ENCODE measurements at regions of chr3 and their contacts with region 1.

Region 1: DNA sequence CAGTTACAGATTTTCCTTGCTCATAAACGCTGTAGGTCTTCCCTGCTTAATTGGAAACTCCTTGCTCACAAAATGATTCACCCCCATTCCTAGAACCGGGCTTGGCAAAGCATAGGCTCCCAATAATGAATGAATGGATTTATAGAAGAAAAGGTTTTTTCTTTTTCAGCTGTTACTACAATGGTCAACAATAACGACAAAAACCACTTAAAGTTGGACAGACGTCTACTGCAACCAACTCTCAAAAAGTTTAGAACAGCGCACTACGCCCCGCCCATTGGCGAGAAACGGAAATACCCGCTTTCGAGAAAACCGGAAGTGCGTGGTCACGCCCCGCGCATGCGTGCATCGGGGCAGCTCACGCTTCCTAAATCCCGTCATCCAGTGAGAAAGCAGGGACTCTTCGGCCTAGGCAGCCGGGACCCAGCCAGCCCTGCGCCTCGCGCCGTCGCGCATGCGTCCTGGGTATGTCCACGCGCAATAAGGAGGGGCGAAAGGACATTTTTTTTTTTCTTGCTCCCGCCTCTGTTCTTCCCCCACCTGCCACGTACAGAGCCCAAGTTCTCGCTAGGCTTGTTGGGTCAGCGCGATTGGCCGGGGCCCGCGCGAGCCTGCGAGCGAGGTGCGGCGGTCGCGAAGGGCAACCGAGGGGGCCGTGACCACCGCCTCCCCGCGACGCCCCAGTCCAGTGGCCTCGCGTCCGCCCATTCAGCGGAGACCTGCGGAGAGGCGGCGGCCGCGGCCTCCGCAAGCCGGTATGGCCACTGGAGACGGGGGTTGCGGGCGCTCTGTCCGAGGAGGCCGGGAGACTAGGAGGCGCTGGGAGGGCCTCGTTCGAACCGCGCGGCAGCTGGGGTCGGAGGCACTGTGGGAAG is at the start of gene TFG:
- DNase-seq: peak; percentile 100
- ATAC-seq: peak; percentile 92
- H3K4me3 Mint-ChIP-seq: peak within 1 kb of the TSS; percentile 77
- H3K27ac Mint-ChIP-seq: peak within 1 kb of the TSS; percentile 95
- H3K4me1 Mint-ChIP-seq: peaks cover 38% of the 10 kb centered on the region
- H3K27me3 Mint-ChIP-seq: no peaks in the 10 kb centered on the region
- CTCF ChIP-seq: no peak
- total RNA-seq, gene TFG: 59.2 TPM

Region 2: DNA sequence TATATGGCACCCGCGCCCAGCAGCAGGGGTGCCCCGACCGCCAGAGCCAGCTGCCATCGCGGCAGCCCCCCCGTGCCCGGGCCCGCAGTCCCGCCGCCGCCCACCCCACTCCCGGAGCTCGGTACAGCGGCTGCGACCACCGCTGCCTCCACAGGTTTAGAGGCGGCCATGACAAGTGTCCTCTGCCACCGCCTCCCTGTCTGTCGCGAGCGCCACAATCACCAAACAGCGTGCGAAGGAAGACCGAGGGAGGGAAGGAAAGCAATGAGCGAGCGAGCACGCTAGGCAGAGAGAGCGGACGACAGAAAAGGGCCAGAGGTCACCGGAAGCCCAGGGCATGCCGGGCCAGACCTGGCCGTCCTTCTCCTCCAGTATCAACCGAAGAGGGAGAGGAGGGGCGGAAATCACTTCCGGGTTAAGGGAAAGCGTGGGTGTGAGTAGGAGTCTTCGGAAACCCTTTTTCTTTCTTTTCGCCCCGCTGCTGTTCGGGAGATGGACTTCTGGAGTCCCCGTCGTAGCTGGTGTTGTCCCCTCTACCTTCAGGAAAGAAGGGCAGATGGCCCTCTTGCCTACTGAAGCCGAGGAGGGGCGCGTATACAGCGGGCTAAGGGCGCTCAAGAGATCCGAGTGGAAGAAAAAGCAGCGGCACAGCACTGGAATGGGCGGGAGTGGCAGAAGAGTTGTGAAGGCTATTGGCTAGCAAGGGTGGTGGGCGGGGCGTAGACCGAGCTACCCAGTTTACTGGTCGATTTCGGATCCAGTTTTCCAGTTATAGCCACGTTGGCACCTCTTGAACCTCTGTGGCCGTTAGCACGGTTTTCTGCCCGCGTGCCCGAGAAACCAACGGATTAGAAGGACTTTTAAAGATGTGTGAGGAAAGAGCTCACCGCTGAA is 308.2 kb before region 1 on chr3 and contains the starts of genes LNP1 and TOMM70:
- CTCF ChIA-PET with region 1: no interaction called
- POLR2A ChIA-PET with region 1: interaction called, 16 read pairs
- intact Hi-C with region 1: no loop called
- DNase-seq: peak; percentile 99
- ATAC-seq: peak; percentile 91
- H3K4me3 Mint-ChIP-seq: peak within 1 kb of the TSS; percentile 84
- H3K27ac Mint-ChIP-seq: peak within 1 kb of the TSS; percentile 98
- H3K4me1 Mint-ChIP-seq: peaks cover 55% of the 10 kb centered on the region
- H3K27me3 Mint-ChIP-seq: no peaks in the 10 kb centered on the region
- CTCF ChIP-seq: no peak
- total RNA-seq, gene LNP1: 2.5 TPM
- total RNA-seq, gene TOMM70: 56.2 to 57.8 TPM

Region 3: GRCh38 chr3:100634493-100635272 is 74.5 kb before region 1 on chr3:
- CTCF ChIA-PET with region 1: interaction called, 7 read pairs
- POLR2A ChIA-PET with region 1: interaction called, 4 read pairs
- intact Hi-C with region 1: loop called (anchors 5 kb)
- DNase-seq: peak; percentile 74
- ATAC-seq: peak; percentile 81
- H3K4me3 Mint-ChIP-seq: no peak overlapping the region
- H3K27ac Mint-ChIP-seq: peak overlapping the region; percentile 44
- H3K4me1 Mint-ChIP-seq: peaks cover 11% of the 10 kb centered on the region
- H3K27me3 Mint-ChIP-seq: peaks cover 1% of the 10 kb centered on the region
- CTCF ChIP-seq: no peak

Region 4: GRCh38 chr3:100665230-100665629 is 44.0 kb before region 1 on chr3:
- CTCF ChIA-PET with region 1: interaction called, 5 read pairs
- POLR2A ChIA-PET with region 1: interaction called, 11 read pairs
- intact Hi-C with region 1: loop called (anchors 2 kb)
- DNase-seq: peak; percentile 76
- ATAC-seq: peak; percentile 94
- H3K4me3 Mint-ChIP-seq: no peak overlapping the region
- H3K27ac Mint-ChIP-seq: peak overlapping the region; percentile 69
- H3K4me1 Mint-ChIP-seq: peaks cover 34% of the 10 kb centered on the region
- H3K27me3 Mint-ChIP-seq: no peaks in the 10 kb centered on the region
- CTCF ChIP-seq: no peak

Region 5: GRCh38 chr3:100725935-100726513 is 16.8 kb after region 1 on chr3:
- CTCF ChIA-PET with region 1: interaction called, 33 read pairs
- POLR2A ChIA-PET with region 1: interaction called, 21 read pairs
- intact Hi-C with region 1: no loop called
- DNase-seq: no peak
- ATAC-seq: no peak
- H3K4me3 Mint-ChIP-seq: no peak overlapping the region
- H3K27ac Mint-ChIP-seq: no peak overlapping the region
- H3K4me1 Mint-ChIP-seq: peaks cover 10% of the 10 kb centered on the region
- H3K27me3 Mint-ChIP-seq: no peaks in the 10 kb centered on the region
- CTCF ChIP-seq: no peak

Region 6: DNA sequence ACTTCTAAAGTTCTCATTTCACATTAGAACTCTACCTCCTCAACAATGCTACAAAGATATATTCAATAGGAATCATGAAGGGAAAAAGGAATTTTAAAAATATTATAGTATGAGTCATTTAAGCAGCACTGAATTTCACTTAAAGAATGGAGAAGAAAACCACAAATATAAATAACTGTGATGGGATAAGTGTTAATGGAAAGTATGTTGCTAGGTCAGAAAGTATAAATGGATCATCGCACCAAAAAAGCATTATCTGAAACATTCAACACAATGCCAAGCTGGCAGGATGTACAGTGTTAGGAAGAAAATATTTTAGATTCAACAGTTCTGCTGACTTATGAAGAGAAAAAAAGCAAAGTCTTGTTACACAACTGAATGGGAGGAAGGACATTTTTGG is 101.5 kb after region 1 on chr3:
- CTCF ChIA-PET with region 1: no interaction called
- POLR2A ChIA-PET with region 1: no interaction called
- intact Hi-C with region 1: no loop called
- DNase-seq: no peak
- ATAC-seq: no peak
- H3K4me3 Mint-ChIP-seq: no peak overlapping the region
- H3K27ac Mint-ChIP-seq: no peak overlapping the region
- H3K4me1 Mint-ChIP-seq: no peaks in the 10 kb centered on the region
- H3K27me3 Mint-ChIP-seq: peaks cover 21% of the 10 kb centered on the region
- CTCF ChIP-seq: no peak

Measured in activated CD8-positive, alpha-beta T cell treated with anti-CD3 and anti-CD28 coated beads for 36 hours (primary cell).